ENCODE measurements at regions of chr17 and their contacts with region 1.

Region 1: GRCh38 chr17:28644985-28645939 is at the start of gene BLTP2:
- DNase-seq: peak; percentile 99
- ATAC-seq: peak; percentile 98
- total RNA-seq, gene BLTP2: 78.6 TPM

Region 2: GRCh38 chr17:28706471-28707338 is 61.4 kb after region 1 on chr17:
- intact Hi-C with region 1: loop called (anchors 5 kb)
- DNase-seq: peak; percentile 17
- ATAC-seq: no peak

Region 3: GRCh38 chr17:28951991-28952975 is 307.0 kb after region 1 on chr17:
- intact Hi-C with region 1: loop called (anchors 5 kb)
- DNase-seq: peak; percentile 97
- ATAC-seq: peak; percentile 88

Measured in Right ventricle myocardium inferior (tissue), 1 donor.